Activated B cell treated with CpG ODN at 0.5 μM for 24 hours (primary cell): ENCODE measurements at regions of chr18 and their contacts with region 1.

Region 1: GRCh38 chr18:44709307-44710126 is 28.8 kb downstream of the SETBP1 start:
- DNase-seq: no peak
- ATAC-seq: peak; percentile 56
- H3K4me3 Mint-ChIP-seq: peak overlapping the region; percentile 9
- H3K27ac Mint-ChIP-seq: peak overlapping the region; percentile 63
- H3K4me1 Mint-ChIP-seq: peaks cover 58% of the 10 kb centered on the region
- H3K27me3 Mint-ChIP-seq: no peaks in the 10 kb centered on the region
- CTCF ChIP-seq: no peak

Region 2: GRCh38 chr18:44719519-44720060 is 10.1 kb after region 1 on chr18:
- CTCF ChIA-PET with region 1: interaction called, 3 read pairs
- POLR2A ChIA-PET with region 1: interaction called, 4 read pairs
- intact Hi-C with region 1: loop called (anchors 1 kb)
- DNase-seq: no peak
- ATAC-seq: no peak
- H3K4me3 Mint-ChIP-seq: no peak overlapping the region
- H3K27ac Mint-ChIP-seq: no peak overlapping the region
- H3K4me1 Mint-ChIP-seq: peaks cover 99% of the 10 kb centered on the region
- H3K27me3 Mint-ChIP-seq: no peaks in the 10 kb centered on the region
- CTCF ChIP-seq: no peak

Region 3: GRCh38 chr18:45303026-45303425 is 593.5 kb after region 1 on chr18:
- CTCF ChIA-PET with region 1: no interaction called
- POLR2A ChIA-PET with region 1: no interaction called
- intact Hi-C with region 1: no loop called
- DNase-seq: no peak
- ATAC-seq: no peak
- H3K4me3 Mint-ChIP-seq: no peak overlapping the region
- H3K27ac Mint-ChIP-seq: no peak overlapping the region
- H3K4me1 Mint-ChIP-seq: no peaks in the 10 kb centered on the region
- H3K27me3 Mint-ChIP-seq: peaks cover 2% of the 10 kb centered on the region
- CTCF ChIP-seq: no peak